PC-9 (cell line): ENCODE measurements at regions of chr1 and their contacts with region 1.

Region 1: GRCh38 chr1:87328272-87329050 is at the start of gene LMO4:
- DNase-seq: peak; percentile 93 to 94
- H3K4me3 ChIP-seq: peak within 1 kb of the TSS; percentile 96
- H3K27ac ChIP-seq: peak within 1 kb of the TSS; percentile 96
- H3K4me1 ChIP-seq: peaks cover 27% of the 10 kb centered on the region
- H3K27me3 ChIP-seq: no peaks in the 10 kb centered on the region
- CTCF ChIP-seq: no peak
- total RNA-seq, gene LMO4: 37.1 and 47.7 TPM in 2 replicates

Region 2: GRCh38 chr1:87151500-87152421 is 176.7 kb before region 1 on chr1:
- CTCF ChIA-PET with region 1: interaction called, 3 read pairs
- POLR2A ChIA-PET with region 1: no interaction called
- intact Hi-C with region 1: loop called (anchors 5 kb)
- DNase-seq: peak in 1 of 2 experiments; percentile 71
- H3K4me3 ChIP-seq: no peak overlapping the region
- H3K27ac ChIP-seq: peak overlapping the region; percentile 78; the same call in 1 of the 2 replicates
- H3K4me1 ChIP-seq: peaks cover 34% of the 10 kb centered on the region
- H3K27me3 ChIP-seq: no peaks in the 10 kb centered on the region
- CTCF ChIP-seq: no peak; the same call in 1 of the 2 replicates

Region 3: DNA sequence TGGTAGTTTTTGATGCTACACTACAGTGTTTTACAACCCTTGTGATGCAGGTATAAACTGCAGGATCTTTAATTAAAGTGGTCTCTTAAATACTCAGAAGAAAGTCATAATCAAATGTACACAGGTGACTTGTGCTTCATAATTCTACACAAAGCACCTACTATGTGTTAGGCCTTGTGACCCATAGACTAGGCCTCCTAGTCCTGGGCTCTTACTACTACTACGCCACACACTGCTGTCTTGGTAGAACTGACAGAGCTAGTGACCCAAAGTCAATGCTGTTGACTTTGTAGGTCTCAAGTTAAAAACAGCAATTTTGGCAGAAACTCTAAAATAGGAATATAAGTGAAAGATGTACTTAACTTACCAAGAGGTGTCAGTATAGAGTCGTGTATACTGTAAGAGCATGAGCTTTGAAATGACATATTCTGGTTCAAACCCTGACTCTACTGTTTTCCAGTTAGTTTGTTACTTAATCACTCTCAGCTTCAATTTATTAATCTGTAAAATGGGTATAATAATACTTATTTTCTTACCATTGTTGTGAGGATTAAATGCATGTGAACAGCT is 48.4 kb before region 1 on chr1:
- CTCF ChIA-PET with region 1: no interaction called
- POLR2A ChIA-PET with region 1: no interaction called
- intact Hi-C with region 1: no loop called
- DNase-seq: no peak
- H3K4me3 ChIP-seq: no peak overlapping the region
- H3K27ac ChIP-seq: no peak overlapping the region
- H3K4me1 ChIP-seq: no peaks in the 10 kb centered on the region
- H3K27me3 ChIP-seq: no peaks in the 10 kb centered on the region
- CTCF ChIP-seq: peak; percentile 53; the same call in 1 of the 2 replicates

Region 4: DNA sequence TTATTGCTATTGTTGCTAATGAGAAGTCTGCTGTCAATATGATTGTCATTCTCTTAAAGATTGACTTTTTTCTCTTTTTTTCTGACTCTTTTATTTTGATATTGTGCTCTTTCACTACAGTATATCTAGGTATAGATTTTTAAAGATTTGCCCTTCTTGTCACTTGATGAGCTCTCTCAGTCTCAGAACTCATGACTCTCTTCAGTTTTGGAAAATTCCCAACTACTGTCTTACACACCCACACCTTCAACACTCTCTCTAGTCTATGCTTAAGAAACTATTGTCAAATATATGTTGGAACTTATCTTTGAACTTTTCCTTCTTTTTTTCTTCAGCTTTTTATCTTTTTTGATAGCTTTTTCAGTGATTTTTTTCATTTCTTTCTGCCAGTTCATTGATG is 50.8 kb after region 1 on chr1:
- CTCF ChIA-PET with region 1: no interaction called
- POLR2A ChIA-PET with region 1: no interaction called
- intact Hi-C with region 1: no loop called
- DNase-seq: no peak
- H3K4me3 ChIP-seq: no peak overlapping the region
- H3K27ac ChIP-seq: no peak overlapping the region
- H3K4me1 ChIP-seq: no peaks in the 10 kb centered on the region
- H3K27me3 ChIP-seq: no peaks in the 10 kb centered on the region
- CTCF ChIP-seq: no peak

Region 5: DNA sequence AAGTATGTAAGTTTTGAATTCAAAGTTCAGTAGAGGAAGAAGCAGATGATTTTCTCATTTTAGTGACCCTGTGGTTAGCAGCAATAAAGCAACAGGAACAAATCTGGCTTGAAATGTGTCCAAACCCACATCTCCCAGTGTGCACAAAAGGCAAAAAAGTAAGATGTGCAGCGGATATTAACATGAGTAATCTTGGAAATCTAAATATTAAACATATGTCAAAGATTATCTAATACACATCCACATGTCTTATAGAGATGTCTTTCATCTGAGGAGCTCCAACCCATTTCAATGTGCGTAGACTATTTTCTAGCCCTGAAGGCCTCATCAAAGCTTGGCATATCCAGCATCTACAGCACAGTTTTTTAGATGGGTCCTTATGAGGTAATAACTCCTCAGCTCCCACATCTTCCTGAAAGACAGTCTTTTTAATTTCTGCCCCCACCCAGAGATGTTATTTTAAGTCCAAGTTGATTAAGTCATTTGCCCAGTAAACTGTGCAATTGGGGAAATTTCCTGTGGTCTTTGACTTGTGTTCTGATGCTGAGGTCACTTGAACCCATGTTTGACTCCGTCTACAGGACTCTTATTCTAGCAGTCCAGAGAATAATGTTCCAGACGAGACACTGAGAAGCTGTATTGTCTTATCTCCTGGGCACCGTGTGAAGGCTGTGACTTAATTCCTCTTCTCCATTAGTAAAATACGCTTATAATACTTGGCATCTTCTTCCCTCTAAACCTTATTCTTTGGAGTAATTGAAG is 74.0 kb after region 1 on chr1:
- CTCF ChIA-PET with region 1: no interaction called
- POLR2A ChIA-PET with region 1: no interaction called
- intact Hi-C with region 1: no loop called
- DNase-seq: no peak
- H3K4me3 ChIP-seq: no peak overlapping the region
- H3K27ac ChIP-seq: no peak overlapping the region
- H3K4me1 ChIP-seq: peaks cover 15% of the 10 kb centered on the region; the same call in 1 of the 2 replicates
- H3K27me3 ChIP-seq: no peaks in the 10 kb centered on the region
- CTCF ChIP-seq: no peak

Region 6: GRCh38 chr1:87473203-87473661 is 144.8 kb after region 1 on chr1:
- CTCF ChIA-PET with region 1: interaction called, 13 read pairs
- POLR2A ChIA-PET with region 1: no interaction called
- intact Hi-C with region 1: loop called (anchors 5 kb)
- DNase-seq: peak; percentile 49 to 91
- H3K4me3 ChIP-seq: no peak overlapping the region
- H3K27ac ChIP-seq: peak overlapping the region; percentile 21; the same call in 1 of the 2 replicates
- H3K4me1 ChIP-seq: peaks cover 26% of the 10 kb centered on the region
- H3K27me3 ChIP-seq: no peaks in the 10 kb centered on the region
- CTCF ChIP-seq: no peak

Region 7: GRCh38 chr1:87953732-87954344 is 625.4 kb after region 1 on chr1:
- CTCF ChIA-PET with region 1: interaction called, 4 read pairs
- POLR2A ChIA-PET with region 1: no interaction called
- intact Hi-C with region 1: loop called (anchors 2 kb)
- DNase-seq: peak; percentile 48 to 59
- H3K4me3 ChIP-seq: no peak overlapping the region
- H3K27ac ChIP-seq: no peak overlapping the region
- H3K4me1 ChIP-seq: no peaks in the 10 kb centered on the region
- H3K27me3 ChIP-seq: no peaks in the 10 kb centered on the region
- CTCF ChIP-seq: peak; percentile 93

Region 8: DNA sequence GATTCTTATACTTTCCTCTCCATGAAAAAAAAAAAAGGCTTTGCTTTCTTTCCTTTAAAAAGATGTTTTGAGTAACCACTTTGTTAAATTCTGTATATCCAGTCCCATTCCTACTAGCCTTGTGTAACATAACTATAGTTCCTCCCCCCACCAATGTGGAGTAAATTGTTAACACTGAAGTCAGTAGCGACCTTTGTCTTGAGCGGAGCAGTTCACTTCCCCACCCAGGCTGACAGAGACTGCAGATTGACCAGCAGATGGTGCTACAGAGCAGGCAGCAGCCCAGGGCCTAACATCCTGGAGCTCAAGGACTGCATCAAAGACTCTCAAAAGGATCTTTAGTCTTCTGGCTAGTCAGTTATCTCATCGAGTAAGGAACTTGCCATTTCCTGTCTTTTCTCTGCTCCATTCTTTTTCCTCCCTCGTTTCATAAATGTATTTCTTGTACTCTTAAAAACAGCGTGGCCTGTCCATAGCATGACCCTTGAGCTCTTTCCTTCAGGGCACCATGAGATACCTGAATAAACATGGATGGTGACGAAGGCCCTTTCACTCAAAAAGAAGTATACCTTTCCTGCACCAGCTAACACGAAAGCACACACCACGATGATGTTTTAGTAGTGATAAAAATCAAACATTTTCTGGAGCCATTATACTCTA is 852.1 kb after region 1 on chr1:
- CTCF ChIA-PET with region 1: no interaction called
- POLR2A ChIA-PET with region 1: no interaction called
- intact Hi-C with region 1: loop called (anchors 5 kb)
- DNase-seq: peak; percentile 45 to 63
- H3K4me3 ChIP-seq: no peak overlapping the region
- H3K27ac ChIP-seq: no peak overlapping the region
- H3K4me1 ChIP-seq: peaks cover 8% of the 10 kb centered on the region
- H3K27me3 ChIP-seq: no peaks in the 10 kb centered on the region
- CTCF ChIP-seq: peak; percentile 95